GM13977 (cell line): ENCODE measurements at regions of chr1 and their contacts with region 1.

Region 1: DNA sequence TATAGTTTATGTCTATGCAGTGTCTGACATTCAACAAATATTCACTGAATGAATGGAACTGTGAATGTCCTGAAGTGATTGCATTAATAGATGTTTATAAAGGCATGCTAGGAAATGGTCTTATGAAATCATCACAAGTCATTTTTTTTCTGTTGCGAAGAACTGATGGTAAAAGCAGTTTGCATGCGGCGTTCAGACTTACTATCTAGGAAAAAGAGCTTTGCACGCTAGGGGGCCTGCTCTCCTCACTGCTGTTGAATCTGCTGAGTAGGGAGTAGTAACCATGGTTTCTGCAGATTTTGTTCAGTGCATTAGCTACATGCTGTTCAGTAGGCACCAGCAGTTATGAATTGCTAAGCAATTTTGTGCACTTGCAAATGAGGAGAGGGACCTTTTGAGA is 57.9 kb downstream of the CENPF start:
- DNase-seq: no peak
- CTCF ChIP-seq: no peak

Region 2: GRCh38 chr1:214248311-214249085 is 412.4 kb before region 1 on chr1:
- in situ Hi-C with region 1: no loop called
- DNase-seq: no peak
- CTCF ChIP-seq: no peak

Region 3: DNA sequence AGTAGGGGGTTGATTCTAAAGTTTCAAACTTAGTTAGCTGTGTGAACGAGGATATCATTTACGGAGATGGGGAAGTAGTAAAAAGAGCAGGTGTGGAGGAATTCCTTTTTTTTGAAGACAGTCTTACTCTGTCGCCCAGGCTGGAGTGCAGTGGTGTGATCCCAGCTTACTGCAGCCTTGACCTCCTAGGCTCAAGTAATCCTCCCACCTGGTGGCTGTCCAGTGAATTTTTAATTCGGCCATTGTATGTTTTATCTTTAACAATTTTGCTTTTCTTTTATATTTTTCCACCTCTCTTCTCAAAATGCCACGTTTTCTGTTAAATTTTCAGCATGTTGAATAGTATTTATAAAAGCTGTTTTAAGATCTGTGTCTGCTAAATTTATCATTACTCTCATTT is 70.2 kb before region 1 on chr1:
- in situ Hi-C with region 1: no loop called
- DNase-seq: no peak
- CTCF ChIP-seq: no peak

Region 4: GRCh38 chr1:214899908-214900460 is 239.1 kb after region 1 on chr1:
- in situ Hi-C with region 1: no loop called
- DNase-seq: no peak
- CTCF ChIP-seq: no peak

Region 5: DNA sequence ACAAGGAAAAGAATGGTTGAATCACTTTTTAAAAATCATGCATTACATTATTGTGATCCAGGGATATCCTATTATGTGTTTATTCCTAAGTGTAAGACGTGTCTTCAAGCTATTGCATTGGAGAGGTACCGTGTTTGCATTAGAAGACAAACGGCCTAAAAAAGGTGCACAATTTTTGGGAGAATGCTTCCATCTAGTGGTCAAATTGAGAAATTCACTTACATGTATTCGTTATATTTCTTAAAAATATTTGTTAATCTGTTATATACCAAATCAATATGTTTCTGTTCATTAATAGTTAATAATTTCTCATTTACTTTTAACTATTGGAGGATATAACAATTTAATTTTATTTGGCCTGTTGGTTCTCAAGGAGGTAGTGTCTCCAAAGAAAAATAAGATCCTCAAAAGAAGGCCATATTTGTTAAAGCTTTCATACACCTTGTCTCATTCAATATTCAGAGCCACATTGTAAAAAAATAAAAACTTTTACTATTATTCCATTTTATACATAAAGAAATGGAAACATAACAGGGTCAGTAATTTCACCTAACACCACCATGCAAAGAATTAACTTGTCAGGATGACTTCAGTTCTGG is 865.8 kb after region 1 on chr1:
- in situ Hi-C with region 1: loop called (anchors 25 kb)
- DNase-seq: peak; percentile 25
- CTCF ChIP-seq: peak; percentile 62